Endothelial cell of umbilical vein (primary cell): ENCODE measurements at regions of chr4 and their contacts with region 1.

Region 1: DNA sequence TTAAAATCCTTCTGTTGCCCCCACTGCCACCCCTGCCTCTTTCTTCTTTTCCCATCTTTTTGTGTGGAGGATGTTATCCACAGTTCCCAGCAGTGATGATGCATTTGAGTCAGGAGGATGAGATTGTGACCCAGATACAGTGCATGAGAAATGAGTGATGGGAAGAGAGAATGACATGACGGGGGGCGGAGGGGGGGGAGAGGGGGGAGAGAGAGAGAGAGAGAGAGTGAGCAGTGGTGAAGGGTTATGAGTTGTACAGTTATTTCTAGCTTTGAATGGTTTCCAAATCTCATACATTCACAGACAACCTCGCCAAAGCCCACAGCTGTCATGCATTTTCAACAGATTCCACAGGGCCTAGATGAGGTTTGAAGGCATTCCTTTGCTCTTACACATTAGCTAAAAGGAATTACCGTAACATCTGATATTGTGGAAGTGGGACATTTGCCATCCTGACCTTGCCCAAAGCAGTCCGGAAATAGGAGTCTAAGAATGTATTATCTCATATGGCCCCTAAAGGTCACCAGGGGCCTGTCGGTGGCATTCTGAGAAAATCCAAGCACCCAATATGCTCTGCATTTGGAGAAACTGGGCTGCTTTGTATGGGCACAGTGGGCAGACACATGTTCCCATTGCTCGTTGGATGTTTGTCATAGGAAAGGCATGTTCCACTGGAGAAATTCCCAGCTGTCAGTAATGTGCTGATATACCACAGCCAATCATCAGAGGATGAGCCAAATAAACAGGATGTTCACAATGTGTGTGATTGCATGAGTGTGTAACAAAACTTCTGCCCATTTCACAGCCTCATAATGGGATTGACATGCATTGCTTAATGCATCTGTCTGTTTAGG is 435.8 kb downstream of the SPRY1 start:
- DNase-seq: peak; percentile 86
- H3K4me3 ChIP-seq: no peak overlapping the region
- H3K27ac ChIP-seq: peak overlapping the region; percentile 93
- H3K4me1 ChIP-seq: peaks cover 38% of the 10 kb centered on the region
- H3K27me3 ChIP-seq: no peaks in the 10 kb centered on the region
- CTCF ChIP-seq: no peak
- POLR2A ChIP-seq: peak; percentile 24

Region 2: DNA sequence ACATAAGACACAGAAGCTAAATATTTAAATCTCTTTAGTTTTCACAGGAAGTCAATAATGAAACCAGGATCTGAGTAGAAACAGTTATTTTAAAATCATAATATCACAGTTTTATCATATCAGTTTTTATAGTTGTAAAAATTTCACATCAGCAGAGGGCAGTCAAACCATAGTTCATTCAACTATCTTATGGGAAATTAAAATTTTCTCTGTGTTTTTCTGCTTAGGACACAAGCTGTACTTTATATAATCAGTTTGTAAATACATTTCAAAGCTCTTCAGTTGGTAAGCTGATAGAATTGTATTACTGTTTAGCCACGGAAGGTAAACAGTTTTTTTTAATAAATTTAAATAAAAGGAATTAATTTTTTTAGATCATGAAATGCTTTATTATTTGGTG is 705.2 kb before region 1 on chr4:
- CTCF ChIA-PET with region 1: interaction called, 3 read pairs
- POLR2A ChIA-PET with region 1: no interaction called
- dilution Hi-C with region 1: no loop called
- intact Hi-C with region 1: loop called (anchors 1 kb)
- DNase-seq: peak; percentile 67
- H3K4me3 ChIP-seq: no peak overlapping the region
- H3K27ac ChIP-seq: peak overlapping the region; percentile 65
- H3K4me1 ChIP-seq: peaks cover 19% of the 10 kb centered on the region
- H3K27me3 ChIP-seq: no peaks in the 10 kb centered on the region
- CTCF ChIP-seq: no peak
- POLR2A ChIP-seq: no peak

Region 3: GRCh38 chr4:123418351-123418931 is 414.0 kb before region 1 on chr4:
- CTCF ChIA-PET with region 1: no interaction called
- POLR2A ChIA-PET with region 1: no interaction called
- dilution Hi-C with region 1: no loop called
- intact Hi-C with region 1: loop called (anchors 1 kb)
- DNase-seq: peak; percentile 82
- H3K4me3 ChIP-seq: peak overlapping the region in 1 of 3 experiments; percentile 34
- H3K27ac ChIP-seq: peak overlapping the region; percentile 58
- H3K4me1 ChIP-seq: peaks cover 45% of the 10 kb centered on the region
- H3K27me3 ChIP-seq: no peaks in the 10 kb centered on the region
- CTCF ChIP-seq: no peak
- POLR2A ChIP-seq: no peak

Region 4: GRCh38 chr4:123893011-123893981 is 60.9 kb after region 1 on chr4:
- CTCF ChIA-PET with region 1: no interaction called
- POLR2A ChIA-PET with region 1: no interaction called
- dilution Hi-C with region 1: no loop called
- intact Hi-C with region 1: loop called (anchors 1 kb)
- DNase-seq: peak; percentile 87
- H3K4me3 ChIP-seq: peak overlapping the region in 1 of 3 experiments; percentile 26
- H3K27ac ChIP-seq: peak overlapping the region; percentile 96
- H3K4me1 ChIP-seq: peaks cover 69% of the 10 kb centered on the region
- H3K27me3 ChIP-seq: no peaks in the 10 kb centered on the region
- CTCF ChIP-seq: no peak
- POLR2A ChIP-seq: peak; percentile 43

Region 5: DNA sequence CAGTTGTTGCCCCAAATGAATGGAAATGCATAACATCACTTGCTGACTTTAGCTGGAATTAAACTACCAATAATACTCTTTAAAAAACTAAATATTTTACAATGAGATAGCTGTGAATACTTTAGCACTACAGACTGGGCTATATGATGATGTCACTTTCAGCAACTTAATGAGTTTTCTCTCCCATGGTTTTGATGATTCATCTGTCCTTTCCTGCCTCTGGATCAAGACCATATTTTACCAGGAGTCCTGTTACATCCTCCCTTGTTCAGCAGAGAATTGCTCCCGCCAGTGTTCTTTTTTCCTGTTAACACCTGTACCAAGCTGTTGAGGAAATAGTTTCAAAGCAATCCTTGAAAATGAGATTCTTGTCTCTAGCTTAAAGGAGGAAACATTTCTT is 107.2 kb after region 1 on chr4:
- CTCF ChIA-PET with region 1: interaction called, 3 read pairs
- POLR2A ChIA-PET with region 1: no interaction called
- dilution Hi-C with region 1: no loop called
- intact Hi-C with region 1: loop called (anchors 1 kb)
- DNase-seq: peak; percentile 86
- H3K4me3 ChIP-seq: no peak overlapping the region
- H3K27ac ChIP-seq: peak overlapping the region; percentile 79
- H3K4me1 ChIP-seq: peaks cover 35% of the 10 kb centered on the region
- H3K27me3 ChIP-seq: no peaks in the 10 kb centered on the region
- CTCF ChIP-seq: no peak
- POLR2A ChIP-seq: no peak

Region 6: DNA sequence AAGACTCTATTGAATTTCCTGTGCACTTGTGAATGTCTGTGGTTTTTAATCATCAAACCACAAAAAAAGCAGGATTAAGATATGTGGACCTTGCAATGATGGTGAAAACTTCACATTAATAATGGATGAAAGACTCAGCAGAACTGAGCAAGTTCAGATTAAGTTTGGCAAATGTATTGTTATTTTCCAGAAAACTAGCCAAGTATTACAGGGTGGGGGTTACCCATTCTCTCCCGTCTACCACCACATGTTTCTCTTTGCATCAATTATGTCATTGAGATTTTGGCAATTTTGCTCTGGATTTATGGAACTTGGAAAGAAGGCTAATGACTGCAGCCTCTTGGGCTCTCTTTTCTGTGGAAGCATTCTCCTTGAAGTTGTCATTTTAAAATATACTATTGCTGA is 303.0 kb after region 1 on chr4:
- CTCF ChIA-PET with region 1: no interaction called
- POLR2A ChIA-PET with region 1: no interaction called
- dilution Hi-C with region 1: no loop called
- intact Hi-C with region 1: no loop called
- DNase-seq: no peak
- H3K4me3 ChIP-seq: no peak overlapping the region
- H3K27ac ChIP-seq: no peak overlapping the region
- H3K4me1 ChIP-seq: no peaks in the 10 kb centered on the region
- H3K27me3 ChIP-seq: no peaks in the 10 kb centered on the region
- CTCF ChIP-seq: no peak
- POLR2A ChIP-seq: no peak

Region 7: DNA sequence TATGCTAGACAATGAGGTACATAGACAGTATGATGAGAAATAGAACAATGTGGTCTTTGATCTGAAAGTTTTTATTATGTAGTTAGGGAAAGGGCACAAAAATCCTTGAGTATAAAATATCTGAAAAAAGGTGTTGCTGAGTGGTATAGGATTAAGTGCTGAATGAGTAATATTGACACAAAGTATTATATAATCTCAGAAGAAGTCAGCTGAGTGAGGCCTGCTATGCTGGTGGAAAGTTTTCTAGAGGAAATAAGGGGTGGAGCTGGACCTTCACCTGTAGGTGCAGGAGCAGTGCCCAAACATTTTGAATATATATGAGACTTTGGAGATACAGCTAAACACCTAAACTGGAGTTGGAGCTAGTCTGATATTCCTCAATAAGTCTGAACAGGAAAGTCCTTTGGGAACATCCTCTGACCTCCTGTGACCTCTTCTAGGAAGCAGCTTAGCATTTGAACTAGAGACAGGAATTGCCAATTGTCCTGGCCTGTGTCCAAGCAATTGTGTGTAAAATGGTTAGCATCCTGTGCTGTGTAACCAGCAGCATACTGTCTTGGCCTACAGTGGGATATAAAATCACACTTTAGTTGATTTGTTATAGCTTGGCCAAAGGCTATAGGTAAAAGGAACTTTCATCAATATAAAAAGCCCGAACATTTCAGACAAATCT is 594.8 kb after region 1 on chr4:
- CTCF ChIA-PET with region 1: no interaction called
- POLR2A ChIA-PET with region 1: no interaction called
- dilution Hi-C with region 1: no loop called
- intact Hi-C with region 1: loop called (anchors 2 kb)
- DNase-seq: peak; percentile 72
- H3K4me3 ChIP-seq: no peak overlapping the region
- H3K27ac ChIP-seq: peak overlapping the region; percentile 100
- H3K4me1 ChIP-seq: peaks cover 68% of the 10 kb centered on the region
- H3K27me3 ChIP-seq: no peaks in the 10 kb centered on the region
- CTCF ChIP-seq: no peak
- POLR2A ChIP-seq: no peak